Naive thymus-derived CD4-positive, alpha-beta T cell (primary cell): ENCODE measurements at regions of chr12 and their contacts with region 1.

Region 1: GRCh38 chr12:32312049-32312670 is 87.2 kb upstream of the FGD4 start:
- DNase-seq: peak in 7 of 9 donors; percentile 22 to 63 (median 39)
- ATAC-seq: peak; percentile 69
- H3K4me3 ChIP-seq: no peak overlapping the region
- H3K4me3 Mint-ChIP-seq: peak overlapping the region in 3 of 10 donors; percentile 54 to 61 (median 54)
- H3K27ac ChIP-seq: no peak overlapping the region
- H3K27ac Mint-ChIP-seq: peak overlapping the region in 7 of 9 donors; percentile 22 to 92 (median 44)
- H3K4me1 ChIP-seq: no peaks in the 10 kb centered on the region
- H3K4me1 Mint-ChIP-seq: peaks cover 0 to 12% (median 9%) of the 10 kb centered on the region in 7 donors
- H3K27me3 ChIP-seq: no peaks in the 10 kb centered on the region
- H3K27me3 Mint-ChIP-seq: no peaks in the 10 kb centered on the region

Region 2: GRCh38 chr12:31650927-31651326 is 661.2 kb before region 1 on chr12:
- CTCF ChIA-PET with region 1: interaction called, 105 read pairs
- POLR2A ChIA-PET with region 1: interaction called, 10 read pairs
- intact Hi-C with region 1: loop called (anchors 1 kb)
- DNase-seq: no peak
- ATAC-seq: no peak
- H3K4me3 ChIP-seq: no peak overlapping the region
- H3K4me3 Mint-ChIP-seq: no peak overlapping the region
- H3K27ac ChIP-seq: no peak overlapping the region
- H3K27ac Mint-ChIP-seq: no peak overlapping the region
- H3K4me1 ChIP-seq: peaks cover 0 to 7% of the 10 kb centered on the region in 2 donors
- H3K4me1 Mint-ChIP-seq: peaks cover 6 to 16% (median 13%) of the 10 kb centered on the region in 7 donors
- H3K27me3 ChIP-seq: no peaks in the 10 kb centered on the region
- H3K27me3 Mint-ChIP-seq: no peaks in the 10 kb centered on the region

Region 3: GRCh38 chr12:31682136-31682962 is 629.8 kb before region 1 on chr12:
- CTCF ChIA-PET with region 1: interaction called, 13 read pairs
- POLR2A ChIA-PET with region 1: no interaction called
- intact Hi-C with region 1: loop called (anchors 1 kb)
- DNase-seq: peak; percentile 30 to 72 (median 66)
- ATAC-seq: peak; percentile 96
- H3K4me3 ChIP-seq: no peak overlapping the region
- H3K4me3 Mint-ChIP-seq: peak overlapping the region in 9 of 10 donors; percentile 2 to 74 (median 23)
- H3K27ac ChIP-seq: no peak overlapping the region
- H3K27ac Mint-ChIP-seq: peak overlapping the region; percentile 9 to 97 (median 74)
- H3K4me1 ChIP-seq: peaks cover 0 to 5% of the 10 kb centered on the region in 2 donors
- H3K4me1 Mint-ChIP-seq: peaks cover 5 to 17% (median 11%) of the 10 kb centered on the region in 7 donors
- H3K27me3 ChIP-seq: no peaks in the 10 kb centered on the region
- H3K27me3 Mint-ChIP-seq: no peaks in the 10 kb centered on the region

Region 4: GRCh38 chr12:32181498-32182175 is 130.5 kb before region 1 on chr12:
- CTCF ChIA-PET with region 1: no interaction called
- POLR2A ChIA-PET with region 1: no interaction called
- intact Hi-C with region 1: no loop called
- DNase-seq: no peak
- ATAC-seq: no peak
- H3K4me3 ChIP-seq: no peak overlapping the region
- H3K4me3 Mint-ChIP-seq: no peak overlapping the region
- H3K27ac ChIP-seq: no peak overlapping the region
- H3K27ac Mint-ChIP-seq: no peak overlapping the region
- H3K4me1 ChIP-seq: no peaks in the 10 kb centered on the region
- H3K4me1 Mint-ChIP-seq: peaks cover 0 to 14% (median 0%) of the 10 kb centered on the region in 7 donors
- H3K27me3 ChIP-seq: no peaks in the 10 kb centered on the region
- H3K27me3 Mint-ChIP-seq: no peaks in the 10 kb centered on the region

Region 5: GRCh38 chr12:32261638-32262037 is 50.5 kb before region 1 on chr12:
- CTCF ChIA-PET with region 1: interaction called, 3 read pairs
- POLR2A ChIA-PET with region 1: no interaction called
- intact Hi-C with region 1: loop called in 1 of 2 experiments (anchors 1 kb)
- DNase-seq: no peak
- ATAC-seq: no peak
- H3K4me3 ChIP-seq: no peak overlapping the region
- H3K4me3 Mint-ChIP-seq: no peak overlapping the region
- H3K27ac ChIP-seq: no peak overlapping the region
- H3K27ac Mint-ChIP-seq: no peak overlapping the region
- H3K4me1 ChIP-seq: no peaks in the 10 kb centered on the region
- H3K4me1 Mint-ChIP-seq: peaks cover 3 to 18% (median 12%) of the 10 kb centered on the region in 7 donors
- H3K27me3 ChIP-seq: no peaks in the 10 kb centered on the region
- H3K27me3 Mint-ChIP-seq: no peaks in the 10 kb centered on the region